Dendritic cell treated with granulocyte-macrophage colony-stimulating factor and Interleukin-4, amounts not matched to agents 40 ng/mL and 50 ng/mL, for 4 days (primary cell): ENCODE measurements at regions of chr10 and their contacts with region 1.

Region 1: DNA sequence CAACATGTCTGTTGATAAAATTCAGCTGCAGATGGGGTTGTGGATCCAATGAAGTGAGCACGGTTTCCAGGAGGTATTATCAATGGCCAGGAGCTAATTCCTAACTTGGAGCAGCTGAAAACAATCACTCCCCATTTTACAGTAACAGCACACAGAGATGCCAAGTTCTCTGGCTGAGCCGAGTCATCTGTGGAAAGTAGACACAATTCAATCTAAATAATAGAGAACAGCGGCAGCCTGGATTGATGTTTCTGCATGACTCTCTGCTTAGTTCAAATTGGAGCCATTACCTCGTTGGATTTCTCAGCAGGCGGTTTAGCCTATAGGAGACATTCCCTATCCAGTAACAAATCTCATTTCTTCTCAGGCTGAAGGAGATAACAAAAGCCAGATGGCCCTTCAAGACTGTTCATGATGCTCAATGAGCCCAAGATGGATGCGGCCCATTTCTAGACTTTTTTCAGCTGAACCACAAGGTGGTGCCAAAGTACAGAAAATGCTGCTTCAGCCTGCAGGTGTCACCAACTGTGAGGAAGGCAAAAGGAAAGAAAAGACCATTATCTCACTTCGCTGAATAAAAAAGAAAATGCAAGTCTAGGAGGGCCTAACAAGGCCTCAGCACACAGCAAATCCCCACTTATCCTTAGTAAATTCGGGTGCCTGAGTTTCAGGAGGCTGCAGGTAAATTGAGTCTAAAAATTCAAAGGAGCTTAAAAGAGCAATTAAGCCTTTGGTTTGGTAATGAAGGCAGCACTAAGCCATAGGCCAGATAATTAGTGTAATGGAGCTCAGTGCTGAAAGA is 83.7 kb downstream of the SLC16A9 start:
- H3K4me3 Mint-ChIP-seq: no peak overlapping the region
- H3K27ac Mint-ChIP-seq: no peak overlapping the region
- H3K4me1 Mint-ChIP-seq: peaks cover 5% of the 10 kb centered on the region
- H3K27me3 Mint-ChIP-seq: no peaks in the 10 kb centered on the region

Region 2: GRCh38 chr10:58531084-58531695 is 1094.7 kb before region 1 on chr10:
- intact Hi-C with region 1: loop called (anchors 5 kb)
- H3K4me3 Mint-ChIP-seq: no peak overlapping the region
- H3K27ac Mint-ChIP-seq: no peak overlapping the region
- H3K4me1 Mint-ChIP-seq: peaks cover 7% of the 10 kb centered on the region
- H3K27me3 Mint-ChIP-seq: peaks cover 1% of the 10 kb centered on the region

Region 3: GRCh38 chr10:59240582-59241183 is 385.2 kb before region 1 on chr10:
- intact Hi-C with region 1: loop called (anchors 2 kb)
- H3K4me3 Mint-ChIP-seq: no peak overlapping the region
- H3K27ac Mint-ChIP-seq: no peak overlapping the region
- H3K4me1 Mint-ChIP-seq: peaks cover 4% of the 10 kb centered on the region
- H3K27me3 Mint-ChIP-seq: no peaks in the 10 kb centered on the region

Region 4: GRCh38 chr10:59493017-59493416 is 132.9 kb before region 1 on chr10:
- intact Hi-C with region 1: no loop called
- H3K4me3 Mint-ChIP-seq: no peak overlapping the region
- H3K27ac Mint-ChIP-seq: no peak overlapping the region
- H3K4me1 Mint-ChIP-seq: no peaks in the 10 kb centered on the region
- H3K27me3 Mint-ChIP-seq: no peaks in the 10 kb centered on the region

Region 5: GRCh38 chr10:59513558-59513957 is 112.4 kb before region 1 on chr10:
- intact Hi-C with region 1: no loop called
- H3K4me3 Mint-ChIP-seq: no peak overlapping the region
- H3K27ac Mint-ChIP-seq: no peak overlapping the region
- H3K4me1 Mint-ChIP-seq: no peaks in the 10 kb centered on the region
- H3K27me3 Mint-ChIP-seq: no peaks in the 10 kb centered on the region

Region 6: DNA sequence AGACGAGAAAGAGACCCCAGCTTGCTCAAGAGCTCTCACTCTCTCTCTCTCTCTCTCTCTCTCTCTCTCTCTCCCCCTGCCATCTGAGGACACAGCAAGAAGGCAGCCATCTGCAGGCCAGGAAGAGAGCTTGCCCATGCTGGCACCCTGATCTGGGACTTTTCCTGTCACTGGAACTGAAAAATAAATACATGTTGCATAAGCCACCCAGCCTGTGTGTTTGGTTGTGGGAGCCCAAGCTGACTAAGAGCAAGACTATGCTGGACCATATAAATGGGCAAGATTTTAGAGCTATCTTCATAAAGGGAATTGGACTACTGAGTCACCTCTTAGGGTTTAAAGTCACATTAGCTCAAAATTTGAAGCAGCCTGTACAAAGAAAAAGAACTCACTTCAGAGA is 14.9 kb before region 1 on chr10:
- intact Hi-C with region 1: no loop called
- H3K4me3 Mint-ChIP-seq: no peak overlapping the region
- H3K27ac Mint-ChIP-seq: no peak overlapping the region
- H3K4me1 Mint-ChIP-seq: no peaks in the 10 kb centered on the region
- H3K27me3 Mint-ChIP-seq: no peaks in the 10 kb centered on the region

Region 7: GRCh38 chr10:59830601-59831259 is 204.8 kb after region 1 on chr10:
- intact Hi-C with region 1: loop called (anchors 2 kb)
- H3K4me3 Mint-ChIP-seq: no peak overlapping the region
- H3K27ac Mint-ChIP-seq: no peak overlapping the region
- H3K4me1 Mint-ChIP-seq: peaks cover 28% of the 10 kb centered on the region
- H3K27me3 Mint-ChIP-seq: no peaks in the 10 kb centered on the region

Region 8: GRCh38 chr10:60048091-60048501 is 422.2 kb after region 1 on chr10:
- intact Hi-C with region 1: loop called (anchors 5 kb)
- H3K4me3 Mint-ChIP-seq: no peak overlapping the region
- H3K27ac Mint-ChIP-seq: no peak overlapping the region
- H3K4me1 Mint-ChIP-seq: no peaks in the 10 kb centered on the region
- H3K27me3 Mint-ChIP-seq: no peaks in the 10 kb centered on the region

Region 9: DNA sequence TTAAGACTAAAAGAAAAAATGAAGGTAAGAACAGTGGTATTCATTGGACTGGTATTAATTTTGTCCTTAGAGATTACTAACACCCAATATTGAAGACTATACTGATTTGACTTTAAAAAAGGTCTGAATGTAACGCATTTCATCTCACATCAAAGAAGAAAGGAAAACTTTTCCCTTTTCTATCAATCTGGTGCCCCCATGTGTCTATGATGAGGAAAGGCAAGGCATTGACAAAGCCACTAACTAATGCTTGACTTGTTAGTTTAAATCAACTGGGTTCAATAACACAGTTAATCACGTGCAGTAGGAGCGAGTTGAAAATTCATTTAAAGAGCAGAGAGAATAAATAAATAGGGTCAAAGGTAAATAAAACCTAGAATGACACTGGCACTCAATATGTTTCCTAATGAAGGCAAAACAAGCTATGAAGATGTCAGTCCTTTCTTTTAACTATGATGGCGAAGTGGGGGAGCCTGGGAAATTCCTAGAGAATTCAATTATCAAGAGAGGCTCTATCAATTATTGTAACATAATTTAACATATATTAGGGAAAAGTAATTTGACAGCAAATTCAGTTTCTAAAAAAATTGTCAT is 582.9 kb after region 1 on chr10:
- intact Hi-C with region 1: loop called (anchors 5 kb)
- H3K4me3 Mint-ChIP-seq: no peak overlapping the region
- H3K27ac Mint-ChIP-seq: no peak overlapping the region
- H3K4me1 Mint-ChIP-seq: peaks cover 14% of the 10 kb centered on the region
- H3K27me3 Mint-ChIP-seq: no peaks in the 10 kb centered on the region